ENCODE measurements at regions of chr2 and their contacts with region 1.

Region 1: DNA sequence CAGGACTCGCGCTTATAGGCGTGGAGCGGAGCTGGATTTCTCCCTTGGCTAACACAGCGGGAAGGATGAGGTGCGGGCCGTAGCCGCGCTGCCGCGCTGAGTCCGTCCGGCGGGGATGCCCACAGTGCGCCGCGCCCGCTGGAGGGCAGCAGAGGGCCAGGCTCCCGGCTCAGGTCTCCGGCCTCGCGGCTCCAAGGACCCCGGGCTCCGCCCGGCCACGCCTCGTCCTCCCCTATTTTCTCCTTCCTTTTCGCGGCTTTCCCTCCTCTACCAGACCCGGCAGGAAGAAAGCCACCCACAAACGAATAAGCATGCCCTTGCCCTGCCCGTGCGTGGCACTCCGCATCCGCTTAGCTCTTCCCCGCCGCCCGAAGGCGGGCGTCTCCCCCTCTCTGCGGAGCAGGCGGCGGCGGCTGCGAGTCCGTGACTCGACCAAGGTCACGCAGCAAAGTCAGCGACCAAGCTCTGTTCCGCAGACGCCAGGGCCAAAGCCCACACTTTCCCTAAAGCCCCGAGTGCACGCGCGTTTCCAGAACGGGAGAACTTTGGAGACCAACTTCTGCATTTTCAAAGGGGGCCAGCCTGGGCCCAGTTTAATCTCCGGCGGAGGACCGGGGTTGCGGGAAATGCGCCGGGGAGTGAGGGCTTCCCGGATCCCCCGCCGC is 48.6 kb downstream of the KCNIP3 start:
- DNase-seq: peak; percentile 80 to 88
- ATAC-seq: peak; percentile 82 to 97
- H3K4me3 ChIP-seq: peak overlapping the region; percentile 62
- H3K27ac ChIP-seq: peak overlapping the region; percentile 67 to 84
- H3K4me1 ChIP-seq: 0 out of 3 replicates have a peak, but pooled peaks cover 4% of the 10 kb centered on the region
- CTCF ChIP-seq: peak; percentile 92
- EP300 ChIP-seq: no peak
- POLR2A ChIP-seq: peak; percentile 21; the same call in 1 of the 2 replicates
- RAD21 ChIP-seq: peak; percentile 66 to 89

Region 2: DNA sequence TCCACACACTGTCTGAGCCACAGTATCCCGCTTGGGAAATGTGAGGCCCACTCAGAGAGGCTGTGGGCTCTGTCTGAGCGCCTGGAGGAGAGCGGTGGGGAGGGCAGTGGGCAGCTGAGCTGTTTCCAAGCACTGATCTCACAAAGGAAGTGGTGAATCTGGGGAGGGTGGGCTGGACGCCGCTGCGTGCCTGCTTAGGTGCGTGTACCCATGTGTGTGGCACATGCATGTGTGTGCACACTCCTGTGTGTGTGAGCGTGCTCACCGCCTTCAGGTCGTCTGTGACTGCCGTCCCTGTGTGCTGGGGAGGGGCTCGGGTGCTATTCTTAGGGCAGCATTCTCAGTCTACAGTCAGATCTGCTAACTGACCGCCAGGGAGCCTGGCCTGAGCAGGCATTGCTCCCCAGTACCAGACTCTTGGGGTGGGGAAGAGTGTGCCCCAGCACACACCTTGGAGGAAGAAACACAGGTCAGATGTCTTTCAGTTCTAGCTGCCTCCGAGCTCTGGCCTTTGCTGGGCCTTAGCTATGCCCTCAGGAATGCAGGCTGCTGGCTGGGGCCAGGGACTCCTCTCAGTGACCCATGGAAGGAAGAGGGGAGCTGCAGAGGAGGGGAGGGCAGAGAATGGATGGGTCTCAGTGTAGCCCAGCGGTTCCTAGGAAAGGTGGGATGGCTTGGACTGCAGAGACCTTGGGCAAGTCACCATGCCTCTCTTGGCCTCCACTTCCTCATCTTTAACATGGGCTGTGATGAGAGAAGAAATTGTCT is 17.2 kb before region 1 on chr2:
- CTCF ChIA-PET with region 1: interaction called, 27 read pairs
- POLR2A ChIA-PET with region 1: no interaction called
- DNase-seq: no peak
- ATAC-seq: peak in 1 of 2 experiments; percentile 13; a peak in 2 of 6 replicates
- H3K4me3 ChIP-seq: no peak overlapping the region
- H3K27ac ChIP-seq: no peak overlapping the region
- H3K4me1 ChIP-seq: no peaks in the 10 kb centered on the region
- CTCF ChIP-seq: no peak
- EP300 ChIP-seq: no peak
- POLR2A ChIP-seq: no peak
- RAD21 ChIP-seq: no peak

Region 3: DNA sequence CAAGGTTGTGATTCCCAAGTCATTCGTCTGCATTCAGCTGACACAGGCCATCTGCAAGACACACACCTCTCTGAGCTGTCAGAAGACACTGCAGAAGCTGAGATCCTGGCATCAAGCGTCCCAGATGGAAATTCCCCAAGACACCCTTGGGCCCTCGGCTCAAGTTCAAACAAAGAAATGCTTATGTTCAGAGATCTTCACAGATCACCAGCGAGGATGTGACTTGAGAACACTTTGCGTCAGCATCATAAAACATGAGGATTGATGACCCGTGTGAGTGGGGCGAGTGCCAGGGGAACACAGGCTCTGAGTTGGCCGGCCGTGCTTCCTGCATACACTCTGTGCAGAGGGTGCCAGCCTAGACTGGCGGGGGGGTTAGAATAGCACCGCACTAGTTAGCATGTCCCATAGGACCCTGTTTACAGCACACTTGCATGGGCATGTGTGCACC is 11.8 kb before region 1 on chr2:
- CTCF ChIA-PET with region 1: interaction called, 27 read pairs
- POLR2A ChIA-PET with region 1: no interaction called
- DNase-seq: no peak
- ATAC-seq: no peak
- H3K4me3 ChIP-seq: no peak overlapping the region
- H3K27ac ChIP-seq: no peak overlapping the region
- H3K4me1 ChIP-seq: no peaks in the 10 kb centered on the region
- CTCF ChIP-seq: no peak
- EP300 ChIP-seq: no peak
- POLR2A ChIP-seq: no peak
- RAD21 ChIP-seq: no peak

Region 4: DNA sequence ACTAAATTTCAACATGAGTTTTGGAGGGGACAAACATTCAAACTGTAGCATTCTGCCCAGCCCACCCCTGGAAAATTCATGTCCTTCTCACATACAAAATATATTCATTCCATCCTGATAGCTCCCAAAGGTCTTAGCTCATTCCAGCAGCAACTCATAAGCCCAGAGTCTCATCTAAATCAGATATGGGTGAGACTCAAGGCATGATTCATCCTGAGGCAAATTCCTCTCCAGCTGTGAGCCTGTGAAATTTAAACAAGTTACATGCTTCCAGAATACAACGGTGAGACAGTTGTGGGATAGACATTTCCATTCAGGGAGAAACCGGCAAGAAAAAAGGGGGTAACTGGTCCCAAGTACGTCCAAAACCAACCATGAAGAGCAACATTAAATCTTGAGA is 13.3 kb after region 1 on chr2:
- CTCF ChIA-PET with region 1: interaction called, 20 read pairs
- POLR2A ChIA-PET with region 1: no interaction called
- DNase-seq: no peak
- ATAC-seq: no peak
- H3K4me3 ChIP-seq: no peak overlapping the region
- H3K27ac ChIP-seq: no peak overlapping the region
- H3K4me1 ChIP-seq: no peaks in the 10 kb centered on the region
- CTCF ChIP-seq: no peak
- EP300 ChIP-seq: no peak
- POLR2A ChIP-seq: no peak
- RAD21 ChIP-seq: no peak

Region 5: GRCh38 chr2:95402370-95403203 is 56.9 kb after region 1 on chr2 and contains the start of gene FAHD2A:
- CTCF ChIA-PET with region 1: interaction called, 19 read pairs
- POLR2A ChIA-PET with region 1: interaction called, 4 read pairs
- DNase-seq: peak; percentile 88 to 99
- ATAC-seq: peak; percentile 91 to 97
- H3K4me3 ChIP-seq: peak within 1 kb of the TSS; percentile 89
- H3K27ac ChIP-seq: peak within 1 kb of the TSS; percentile 77 to 92
- H3K4me1 ChIP-seq: peaks cover 8% of the 10 kb centered on the region; the same call in 1 of the 3 replicates
- CTCF ChIP-seq: no peak
- EP300 ChIP-seq: no peak
- POLR2A ChIP-seq: peak; percentile 80
- RAD21 ChIP-seq: no peak
- polyA plus RNA-seq, gene FAHD2A: 33.0 and 35.2 TPM in 2 replicates